Activated naive CD4-positive, alpha-beta T cell treated with anti-CD3 and anti-CD28 coated beads for 36 hours (primary cell): ENCODE measurements at regions of chr7 and their contacts with region 1.

Region 1: GRCh38 chr7:135509903-135510602 is at the start of gene CNOT4:
- DNase-seq: peak; percentile 97
- H3K4me3 Mint-ChIP-seq: no peak within 1 kb of the TSS
- H3K27ac Mint-ChIP-seq: no peak within 1 kb of the TSS
- H3K4me1 Mint-ChIP-seq: peaks cover 22% of the 10 kb centered on the region
- H3K27me3 Mint-ChIP-seq: no peaks in the 10 kb centered on the region
- total RNA-seq, gene CNOT4: 16.6 to 20.3 TPM

Region 2: GRCh38 chr7:134316539-134317344 is 1193.3 kb before region 1 on chr7 and contains the start of gene SLC35B4:
- CTCF ChIA-PET with region 1: no interaction called
- intact Hi-C with region 1: loop called (anchors 2 kb)
- DNase-seq: peak; percentile 97
- H3K4me3 Mint-ChIP-seq: peak within 1 kb of the TSS; percentile 92
- H3K27ac Mint-ChIP-seq: peak within 1 kb of the TSS; percentile 77
- H3K4me1 Mint-ChIP-seq: peaks cover 16% of the 10 kb centered on the region
- H3K27me3 Mint-ChIP-seq: no peaks in the 10 kb centered on the region
- total RNA-seq, gene SLC35B4: 7.9 to 10.3 TPM

Region 3: GRCh38 chr7:134587750-134588149 is 922.3 kb before region 1 on chr7:
- CTCF ChIA-PET with region 1: no interaction called
- intact Hi-C with region 1: no loop called
- DNase-seq: no peak
- H3K4me3 Mint-ChIP-seq: no peak overlapping the region
- H3K27ac Mint-ChIP-seq: no peak overlapping the region
- H3K4me1 Mint-ChIP-seq: no peaks in the 10 kb centered on the region
- H3K27me3 Mint-ChIP-seq: peaks cover 14% of the 10 kb centered on the region

Region 4: DNA sequence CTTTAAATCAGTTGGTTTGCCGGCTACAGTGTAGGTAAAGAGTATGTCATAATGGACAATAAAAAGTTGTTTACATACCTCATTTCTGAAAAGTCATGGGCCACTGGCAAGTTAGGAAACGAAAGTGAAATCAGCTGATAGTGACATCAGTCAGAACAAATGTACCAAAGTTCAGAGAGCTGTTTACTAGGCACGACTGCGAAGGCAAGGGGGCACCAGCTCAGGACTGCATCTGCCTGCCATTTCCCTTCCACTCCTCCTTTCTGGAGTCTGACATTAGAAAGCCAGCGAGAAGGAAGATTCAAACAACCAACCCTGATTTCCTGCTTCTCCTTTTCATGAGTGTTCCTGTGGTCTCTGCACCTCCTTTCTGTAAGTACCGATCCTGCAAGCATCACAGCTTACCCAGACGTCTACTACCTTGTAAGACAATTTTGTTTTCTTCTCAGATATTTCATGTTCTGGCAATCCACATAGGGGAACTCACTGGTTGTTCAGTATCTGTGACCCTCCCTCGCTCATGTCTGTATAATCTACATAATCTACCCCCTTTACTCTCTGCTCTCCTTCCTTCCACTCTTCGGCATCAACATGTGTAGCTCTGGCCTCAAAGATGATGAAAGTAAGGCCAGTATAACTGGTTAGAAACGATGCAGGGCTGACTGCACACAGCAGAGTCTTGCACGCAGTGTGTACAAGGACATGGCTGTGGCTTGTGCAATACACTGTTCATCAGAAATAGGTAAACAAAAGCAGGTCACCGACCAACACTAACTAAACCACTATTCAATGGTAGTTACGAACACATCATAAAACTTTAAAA is 361.9 kb before region 1 on chr7 and contains the start of gene TMEM140:
- CTCF ChIA-PET with region 1: no interaction called
- intact Hi-C with region 1: loop called (anchors 5 kb)
- DNase-seq: peak; percentile 72
- H3K4me3 Mint-ChIP-seq: peak within 1 kb of the TSS; percentile 81
- H3K27ac Mint-ChIP-seq: peak within 1 kb of the TSS; percentile 91
- H3K4me1 Mint-ChIP-seq: peaks cover 49% of the 10 kb centered on the region
- H3K27me3 Mint-ChIP-seq: no peaks in the 10 kb centered on the region
- total RNA-seq, gene TMEM140: 8.1 to 9.2 TPM

Region 5: DNA sequence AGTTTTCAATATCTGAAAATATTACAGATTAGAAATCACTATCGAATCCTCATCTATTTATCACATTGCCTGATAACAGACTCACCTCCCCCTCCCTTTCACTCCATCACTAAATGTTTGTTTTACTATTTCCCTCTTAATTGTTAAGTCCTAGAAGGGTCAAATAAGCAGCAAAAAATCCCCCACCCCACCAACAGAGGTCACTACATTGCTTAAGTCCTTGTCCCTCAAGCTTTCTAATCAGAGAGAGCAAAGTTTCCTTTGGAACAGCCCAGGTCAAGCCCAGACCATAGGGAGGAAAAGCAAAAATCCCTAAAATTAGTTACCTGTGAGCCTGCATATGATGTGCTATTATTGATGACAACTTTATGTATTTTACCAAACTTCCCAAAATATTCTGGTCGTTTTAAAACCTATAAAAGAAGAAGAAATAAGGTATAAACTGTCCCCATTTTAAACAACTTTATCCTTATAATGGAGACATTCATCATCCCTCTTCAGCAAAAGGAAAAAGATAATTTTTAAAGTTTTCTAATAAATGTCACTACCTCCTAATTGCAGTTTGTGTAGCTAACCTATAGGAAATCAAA is 95.1 kb before region 1 on chr7:
- CTCF ChIA-PET with region 1: no interaction called
- intact Hi-C with region 1: loop called (anchors 1 kb)
- DNase-seq: peak; percentile 58
- H3K4me3 Mint-ChIP-seq: no peak overlapping the region
- H3K27ac Mint-ChIP-seq: no peak overlapping the region
- H3K4me1 Mint-ChIP-seq: peaks cover 6% of the 10 kb centered on the region
- H3K27me3 Mint-ChIP-seq: no peaks in the 10 kb centered on the region

Region 6: GRCh38 chr7:135645296-135645904 is 135.3 kb after region 1 on chr7:
- CTCF ChIA-PET with region 1: interaction called, 4 read pairs
- intact Hi-C with region 1: loop called (anchors 1 kb)
- DNase-seq: no peak
- H3K4me3 Mint-ChIP-seq: no peak overlapping the region
- H3K27ac Mint-ChIP-seq: no peak overlapping the region
- H3K4me1 Mint-ChIP-seq: no peaks in the 10 kb centered on the region
- H3K27me3 Mint-ChIP-seq: no peaks in the 10 kb centered on the region

Region 7: GRCh38 chr7:135977007-135977741 is 467.1 kb after region 1 on chr7 and contains the start of gene MTPN:
- CTCF ChIA-PET with region 1: no interaction called
- intact Hi-C with region 1: loop called (anchors 1 kb)
- DNase-seq: peak; percentile 98
- H3K4me3 Mint-ChIP-seq: peak within 1 kb of the TSS; percentile 98
- H3K27ac Mint-ChIP-seq: peak within 1 kb of the TSS; percentile 86
- H3K4me1 Mint-ChIP-seq: peaks cover 71% of the 10 kb centered on the region
- H3K27me3 Mint-ChIP-seq: no peaks in the 10 kb centered on the region
- total RNA-seq, gene MTPN: 106 to 108 TPM